Left lung (tissue), 14 donors: ENCODE measurements at regions of chr6 and their contacts with region 1.

Region 1: GRCh38 chr6:131182991-131183425 is 47.7 kb downstream of the AKAP7 start:
- DNase-seq: peak in 2 of 4 donors; percentile 20 to 40
- ATAC-seq: peak; percentile 62
- H3K4me3 ChIP-seq: no peak overlapping the region
- H3K27ac ChIP-seq: no peak overlapping the region
- H3K4me1 ChIP-seq: no peaks in the 10 kb centered on the region
- H3K27me3 ChIP-seq: no peaks in the 10 kb centered on the region
- CTCF ChIP-seq: peak in 1 of 2 donors; percentile 33

Region 2: DNA sequence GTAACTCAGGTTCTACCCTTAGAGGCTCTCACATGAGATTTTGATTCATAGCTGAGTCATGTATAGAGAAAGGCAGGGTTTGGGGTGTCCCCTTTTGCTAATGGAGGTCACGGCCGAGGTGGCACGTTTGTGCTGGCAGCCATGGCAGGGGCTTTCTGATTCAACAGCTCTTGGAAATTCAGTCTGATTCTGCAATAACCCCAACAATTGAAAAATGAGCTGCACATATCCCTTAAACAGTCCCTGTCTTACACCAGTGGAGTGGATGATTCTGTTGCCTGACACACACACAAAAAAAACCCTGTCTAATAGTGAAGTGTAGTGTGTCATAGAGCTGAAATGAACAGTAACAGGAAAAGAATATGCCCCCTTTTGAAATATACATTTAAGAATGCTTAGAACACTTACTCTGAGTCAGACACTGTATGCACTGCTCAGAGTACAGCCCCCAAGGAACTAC is 349.6 kb after region 1 on chr6:
- intact Hi-C with region 1: loop called in 1 of 2 experiments (anchors 10 kb)
- DNase-seq: no peak
- ATAC-seq: no peak
- H3K4me3 ChIP-seq: no peak overlapping the region
- H3K27ac ChIP-seq: no peak overlapping the region
- H3K4me1 ChIP-seq: no peaks in the 10 kb centered on the region
- H3K27me3 ChIP-seq: no peaks in the 10 kb centered on the region
- CTCF ChIP-seq: no peak